ENCODE measurements at regions of chr6 and their contacts with region 1.

Region 1: GRCh38 chr6:29926413-29927274 is 15.7 kb upstream of the HLA-A start:
- H3K4me3 Mint-ChIP-seq: peak overlapping the region; percentile 70
- H3K27ac Mint-ChIP-seq: peak overlapping the region; percentile 92
- H3K4me1 Mint-ChIP-seq: peaks cover 29% of the 10 kb centered on the region
- H3K27me3 Mint-ChIP-seq: no peaks in the 10 kb centered on the region

Region 2: DNA sequence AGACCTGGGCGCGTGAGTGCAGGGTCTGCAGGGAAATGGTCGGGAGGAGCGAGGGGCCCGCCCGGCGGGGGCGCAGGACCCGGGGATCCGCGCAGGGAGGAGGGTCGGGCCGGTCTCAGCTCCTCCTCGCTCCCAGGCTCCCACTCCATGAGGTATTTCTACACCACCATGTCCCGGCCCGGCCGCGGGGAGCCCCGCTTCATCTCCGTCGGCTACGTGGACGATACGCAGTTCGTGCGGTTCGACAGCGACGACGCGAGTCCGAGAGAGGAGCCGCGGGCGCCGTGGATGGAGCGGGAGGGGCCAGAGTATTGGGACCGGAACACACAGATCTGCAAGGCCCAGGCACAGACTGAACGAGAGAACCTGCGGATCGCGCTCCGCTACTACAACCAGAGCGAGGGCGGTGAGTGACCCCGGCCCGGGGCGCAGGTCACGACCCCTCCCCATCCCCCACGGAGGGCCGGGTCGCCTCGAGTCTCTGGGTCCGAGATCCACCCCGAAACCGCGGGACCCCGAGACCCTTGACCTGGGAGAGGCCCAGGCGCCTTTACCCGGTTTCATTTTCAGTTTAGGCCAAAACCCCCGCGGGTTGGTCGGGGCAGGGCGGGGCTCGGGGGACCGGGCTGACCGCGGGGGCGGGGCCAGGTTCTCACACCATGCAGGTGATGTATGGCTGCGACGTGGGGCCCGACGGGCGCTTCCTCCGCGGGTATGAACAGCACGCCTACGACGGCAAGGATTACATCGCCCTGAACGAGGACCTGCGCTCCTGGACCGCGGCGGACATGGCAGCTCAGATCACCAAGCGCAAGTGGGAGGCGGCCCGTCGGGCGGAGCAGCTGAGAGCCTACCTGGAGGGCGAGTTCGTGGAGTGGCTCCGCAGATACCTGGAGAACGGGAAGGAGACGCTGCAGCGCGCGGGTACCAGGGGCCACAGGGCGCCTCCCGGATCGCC is 38.5 kb before region 1 on chr6:
- intact Hi-C with region 1: loop called (anchors 5 kb)
- H3K4me3 Mint-ChIP-seq: peak overlapping the region; percentile 74
- H3K27ac Mint-ChIP-seq: peak overlapping the region; percentile 89
- H3K4me1 Mint-ChIP-seq: peaks cover 16% of the 10 kb centered on the region
- H3K27me3 Mint-ChIP-seq: peaks cover 17% of the 10 kb centered on the region

Region 3: DNA sequence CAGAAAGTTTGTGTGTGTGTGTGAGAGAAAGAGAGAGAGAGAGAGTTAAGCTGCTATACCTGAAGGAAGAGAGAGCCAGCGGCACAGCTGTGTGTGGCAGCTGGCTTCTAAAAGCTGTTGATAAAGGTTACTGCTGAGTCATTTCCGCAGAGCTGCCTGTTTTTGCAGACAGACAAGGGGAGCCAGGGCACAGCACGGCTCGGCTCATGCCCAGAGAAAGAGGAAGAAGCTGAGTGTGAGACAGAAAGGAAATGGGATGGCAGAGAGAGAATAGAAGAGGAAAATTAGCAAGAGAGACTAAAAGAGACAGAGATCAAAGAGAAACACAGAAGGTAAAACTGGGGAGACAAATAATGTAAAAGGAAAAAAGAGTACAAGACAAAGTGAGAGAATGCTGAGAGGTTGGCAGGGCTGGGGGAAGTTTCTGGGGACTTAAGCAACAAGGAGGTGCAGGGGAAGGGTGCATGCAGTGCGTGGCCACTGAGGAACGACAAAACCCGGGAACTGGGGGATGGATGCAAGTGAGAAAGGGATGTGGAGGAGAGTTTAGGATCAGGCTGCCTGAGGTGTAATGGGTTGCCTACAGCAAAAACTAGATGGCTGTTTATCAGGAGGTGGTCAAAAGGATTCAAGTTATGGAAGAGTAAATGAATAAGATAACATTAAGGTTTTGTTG is 38.4 kb after region 1 on chr6:
- intact Hi-C with region 1: loop called (anchors 5 kb)
- H3K4me3 Mint-ChIP-seq: peak overlapping the region; percentile 71
- H3K27ac Mint-ChIP-seq: peak overlapping the region; percentile 87
- H3K4me1 Mint-ChIP-seq: peaks cover 71% of the 10 kb centered on the region
- H3K27me3 Mint-ChIP-seq: no peaks in the 10 kb centered on the region

Measured in dendritic cell treated with granulocyte-macrophage colony-stimulating factor and Interleukin-4, amounts not matched to agents 40 ng/mL and 50 ng/mL, for 4 days (primary cell).